T-cell (primary cell): ENCODE measurements at regions of chr4 and their contacts with region 1.

Region 1: GRCh38 chr4:152385551-152385950 is 150.3 kb downstream of the FBXW7 start:
- DNase-seq: peak in 2 of 35 experiments; percentile 1 to 29
- ATAC-seq: no peak
- H3K4me3 ChIP-seq: no peak overlapping the region
- H3K4me3 Mint-ChIP-seq: no peak overlapping the region
- H3K27ac ChIP-seq: no peak overlapping the region
- H3K27ac Mint-ChIP-seq: no peak overlapping the region
- H3K4me1 ChIP-seq: peaks cover 3 to 7% of the 10 kb centered on the region in 2 experiments
- H3K4me1 Mint-ChIP-seq: peaks cover 22 to 35% (median 31%) of the 10 kb centered on the region in 3 donors
- H3K27me3 ChIP-seq: no peaks in the 10 kb centered on the region
- H3K27me3 Mint-ChIP-seq: no peaks in the 10 kb centered on the region

Region 2: DNA sequence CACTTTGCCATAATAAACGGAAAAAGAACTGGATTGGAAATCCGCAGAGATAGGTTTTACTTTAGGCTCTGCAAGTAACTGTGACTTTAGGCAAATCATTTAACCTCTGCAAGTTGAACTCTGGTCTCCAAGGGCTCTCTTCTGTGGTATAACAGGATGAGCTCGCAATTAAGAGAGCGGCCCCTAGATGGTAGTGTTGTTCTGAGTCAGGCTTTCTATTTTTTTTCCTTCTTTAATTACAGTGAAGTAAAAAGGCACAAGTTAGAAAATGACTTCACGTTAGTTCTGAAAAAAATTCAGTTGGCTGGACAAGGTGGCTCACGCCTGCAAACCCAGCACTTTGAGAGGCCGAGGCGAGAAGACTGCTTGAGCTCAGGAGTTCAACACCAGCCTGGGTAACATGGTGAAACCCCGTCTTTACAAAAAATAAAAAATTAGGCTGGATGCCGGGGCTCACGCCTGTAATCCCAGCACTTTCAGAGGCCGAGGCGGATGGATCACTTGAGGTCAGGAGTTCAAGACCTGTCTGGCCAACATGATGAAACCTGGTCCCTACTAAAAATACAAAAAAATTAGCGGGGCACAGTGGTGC is 1268.1 kb before region 1 on chr4:
- CTCF ChIA-PET with region 1: interaction called in 1 of 2 experiments, 12 read pairs
- POLR2A ChIA-PET with region 1: no interaction called
- DNase-seq: peak in 30 of 35 experiments; percentile 4 to 66 (median 36)
- ATAC-seq: peak; percentile 70 to 81 (median 72)
- H3K4me3 ChIP-seq: no peak overlapping the region
- H3K4me3 Mint-ChIP-seq: no peak overlapping the region
- H3K27ac ChIP-seq: no peak overlapping the region
- H3K27ac Mint-ChIP-seq: no peak overlapping the region
- H3K4me1 ChIP-seq: no peaks in the 10 kb centered on the region
- H3K4me1 Mint-ChIP-seq: peaks cover 3 to 10% (median 3%) of the 10 kb centered on the region in 3 donors
- H3K27me3 ChIP-seq: no peaks in the 10 kb centered on the region
- H3K27me3 Mint-ChIP-seq: no peaks in the 10 kb centered on the region

Region 3: DNA sequence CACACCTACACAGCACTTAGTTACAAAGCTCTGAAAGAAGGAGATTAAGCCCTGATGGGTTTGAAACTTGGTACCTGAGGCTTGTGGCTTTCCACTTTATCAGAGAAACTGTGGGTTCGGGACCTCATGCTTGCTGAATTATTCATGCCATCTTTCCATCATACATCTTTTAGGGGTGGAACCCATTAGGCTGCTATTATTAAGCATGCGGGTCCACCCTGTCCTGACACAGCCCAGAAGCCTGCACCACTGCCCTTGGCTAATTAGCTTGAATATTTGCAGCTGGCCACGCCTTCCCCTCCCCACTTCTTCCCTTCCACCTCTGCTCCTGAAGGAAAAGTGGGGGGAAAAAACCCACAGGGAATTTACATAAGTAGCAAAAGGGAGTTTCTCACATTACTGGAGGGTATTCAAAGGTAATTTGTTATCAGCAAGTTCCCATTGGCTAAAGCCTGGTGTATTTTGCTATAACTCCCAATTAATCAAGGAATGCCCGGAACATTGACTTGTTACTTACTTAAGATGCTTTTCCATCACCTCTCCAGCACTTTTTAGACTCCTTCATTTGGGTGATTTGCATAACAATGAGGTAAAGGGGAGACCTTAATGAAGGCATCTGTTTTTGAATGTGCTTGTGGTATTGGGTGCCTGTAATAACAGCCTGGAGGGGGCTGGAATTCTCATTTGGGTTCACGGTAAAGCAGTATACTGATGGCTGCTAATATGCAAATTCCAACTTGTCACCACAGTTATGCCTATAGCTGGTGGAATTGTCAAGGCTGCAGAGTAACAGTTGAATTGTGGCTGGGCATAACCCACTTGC is 393.0 kb before region 1 on chr4:
- CTCF ChIA-PET with region 1: no interaction called
- POLR2A ChIA-PET with region 1: no interaction called
- DNase-seq: no peak
- ATAC-seq: no peak
- H3K4me3 ChIP-seq: no peak overlapping the region
- H3K4me3 Mint-ChIP-seq: peak overlapping the region in 1 of 3 donors; percentile 74
- H3K27ac ChIP-seq: no peak overlapping the region
- H3K27ac Mint-ChIP-seq: peak overlapping the region in 1 of 2 donors; percentile 90
- H3K4me1 ChIP-seq: peaks cover 36 to 48% of the 10 kb centered on the region in 2 experiments
- H3K4me1 Mint-ChIP-seq: peaks cover 61 to 70% (median 64%) of the 10 kb centered on the region in 3 donors
- H3K27me3 ChIP-seq: no peaks in the 10 kb centered on the region
- H3K27me3 Mint-ChIP-seq: no peaks in the 10 kb centered on the region

Region 4: DNA sequence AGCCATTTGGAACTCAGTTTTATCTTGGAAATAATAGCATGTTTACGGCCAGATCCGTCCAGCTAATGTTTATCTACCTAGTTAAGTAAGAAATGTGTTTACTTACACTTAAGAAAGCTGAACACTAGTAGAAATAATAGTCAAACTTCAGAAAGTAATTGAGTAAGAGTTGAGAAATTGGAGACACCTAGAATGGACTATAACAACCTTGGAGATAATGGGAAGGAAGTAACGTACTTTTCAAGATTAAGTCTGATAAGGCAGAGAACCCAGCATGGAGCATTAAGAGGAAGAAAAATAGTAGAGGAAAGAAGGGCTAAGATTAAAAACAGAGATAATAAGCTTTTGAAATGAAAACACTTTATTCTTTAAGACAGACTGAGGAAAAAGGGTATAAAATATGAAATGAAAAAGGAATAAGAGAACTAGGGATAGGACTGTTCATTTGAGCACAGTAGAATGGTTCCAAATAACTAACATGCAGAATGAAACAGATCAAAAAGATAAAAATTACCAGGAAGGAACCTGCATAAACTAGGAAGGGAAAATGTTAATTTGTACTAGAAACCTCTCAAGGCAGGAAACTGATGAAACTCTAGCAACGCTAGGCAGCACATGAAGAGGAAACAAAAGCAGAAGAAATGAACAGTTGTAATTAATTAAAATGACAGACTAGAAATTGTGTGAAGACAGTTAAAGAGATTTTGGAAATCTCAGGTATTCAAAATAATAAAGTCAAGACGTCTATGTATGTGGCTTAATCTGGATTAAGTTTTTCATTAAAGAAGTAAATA is 78.7 kb after region 1 on chr4:
- CTCF ChIA-PET with region 1: no interaction called
- POLR2A ChIA-PET with region 1: interaction called in 1 of 2 experiments, 11 read pairs
- DNase-seq: no peak
- ATAC-seq: peak in 1 of 4 experiments; percentile 59
- H3K4me3 ChIP-seq: no peak overlapping the region
- H3K4me3 Mint-ChIP-seq: peak overlapping the region in 1 of 3 donors; percentile 27
- H3K27ac ChIP-seq: no peak overlapping the region
- H3K27ac Mint-ChIP-seq: peak overlapping the region; percentile 16 to 66
- H3K4me1 ChIP-seq: peaks cover 4 to 27% of the 10 kb centered on the region in 2 experiments
- H3K4me1 Mint-ChIP-seq: peaks cover 55 to 62% (median 59%) of the 10 kb centered on the region in 3 donors
- H3K27me3 ChIP-seq: no peaks in the 10 kb centered on the region
- H3K27me3 Mint-ChIP-seq: no peaks in the 10 kb centered on the region